ENCODE measurements at regions of chr3 and their contacts with region 1.

Region 1: DNA sequence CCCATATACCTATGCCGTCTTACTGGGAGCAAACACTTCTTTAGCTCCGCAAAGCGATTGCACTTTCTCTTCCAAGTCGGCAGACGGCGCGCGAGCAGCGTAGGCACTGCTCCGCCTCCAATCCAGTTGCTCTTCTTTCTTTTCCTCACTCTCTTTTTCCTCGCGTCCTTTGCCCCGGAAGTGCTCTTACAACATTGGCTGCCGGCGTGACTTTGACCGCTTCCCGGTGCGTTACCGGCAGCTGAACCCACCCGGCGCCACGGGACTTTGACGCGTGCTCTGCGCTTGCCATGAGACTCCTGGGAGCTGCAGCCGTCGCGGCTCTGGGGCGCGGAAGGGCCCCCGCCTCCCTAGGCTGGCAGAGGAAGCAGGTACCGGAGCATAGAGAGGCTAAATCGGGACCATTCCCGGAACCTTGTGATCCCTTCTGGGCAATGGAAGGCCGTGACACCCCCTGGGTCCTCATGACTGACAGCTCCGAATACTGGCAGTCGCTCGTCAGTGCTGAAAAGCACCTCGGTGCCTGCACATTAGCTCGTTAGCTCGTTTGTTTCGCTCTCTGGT is at the start of gene GFM1:
- DNase-seq: peak; percentile 80 to 87
- H3K4me3 ChIP-seq: peak within 1 kb of the TSS; percentile 80 to 95 (median 92)
- H3K27ac ChIP-seq: peak within 1 kb of the TSS; percentile 77; the same call in 1 of the 2 replicates
- H3K4me1 ChIP-seq: no peaks in the 10 kb centered on the region
- H3K27me3 ChIP-seq: no peaks in the 10 kb centered on the region
- CTCF ChIP-seq: peak; percentile 81 to 95 (median 91)
- EP300 ChIP-seq: no peak
- POLR2A ChIP-seq: peak; percentile 22 to 83
- RAD21 ChIP-seq: peak; percentile 50 to 56
- total RNA-seq, gene GFM1: 42.6 and 45.3 TPM in 2 replicates

Region 2: DNA sequence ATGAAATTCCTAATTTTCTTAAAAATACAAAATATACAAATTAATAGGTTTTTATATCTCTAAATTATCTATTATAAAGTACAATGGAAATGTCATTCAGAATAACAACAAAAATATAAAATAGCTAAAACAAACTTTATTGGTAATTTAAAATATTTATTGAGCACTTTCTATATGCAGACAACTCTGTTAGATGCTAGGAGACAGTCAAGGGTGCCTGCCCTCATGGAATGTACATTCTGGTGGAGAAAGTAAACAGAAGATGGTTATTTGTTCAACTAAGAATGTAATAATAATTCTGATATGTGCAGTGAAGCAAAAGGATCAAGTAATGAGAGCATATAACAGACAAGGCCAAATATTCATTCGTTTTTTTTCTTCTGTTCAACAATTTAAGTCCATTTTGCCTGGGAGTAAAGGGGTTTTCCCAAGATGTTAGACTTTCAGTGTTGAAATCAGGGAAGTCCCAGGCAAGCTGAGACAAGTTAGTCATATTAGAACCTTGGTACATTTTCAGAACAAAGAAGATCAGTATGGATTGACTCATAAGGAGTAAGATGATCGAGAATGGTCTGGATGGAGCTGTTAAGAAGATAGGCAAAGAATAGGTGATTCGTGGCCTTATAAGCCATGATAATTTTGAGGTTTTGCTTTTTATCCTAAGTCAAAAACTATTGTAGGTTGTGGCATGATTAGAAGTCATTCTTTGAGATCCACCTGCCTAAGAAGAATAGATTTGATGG is 223.6 kb before region 1 on chr3:
- CTCF ChIA-PET with region 1: no interaction called
- POLR2A ChIA-PET with region 1: no interaction called
- DNase-seq: no peak
- H3K4me3 ChIP-seq: no peak overlapping the region
- H3K27ac ChIP-seq: no peak overlapping the region
- H3K4me1 ChIP-seq: no peaks in the 10 kb centered on the region
- H3K27me3 ChIP-seq: no peaks in the 10 kb centered on the region
- CTCF ChIP-seq: no peak
- EP300 ChIP-seq: no peak
- POLR2A ChIP-seq: no peak
- RAD21 ChIP-seq: no peak

Region 3: DNA sequence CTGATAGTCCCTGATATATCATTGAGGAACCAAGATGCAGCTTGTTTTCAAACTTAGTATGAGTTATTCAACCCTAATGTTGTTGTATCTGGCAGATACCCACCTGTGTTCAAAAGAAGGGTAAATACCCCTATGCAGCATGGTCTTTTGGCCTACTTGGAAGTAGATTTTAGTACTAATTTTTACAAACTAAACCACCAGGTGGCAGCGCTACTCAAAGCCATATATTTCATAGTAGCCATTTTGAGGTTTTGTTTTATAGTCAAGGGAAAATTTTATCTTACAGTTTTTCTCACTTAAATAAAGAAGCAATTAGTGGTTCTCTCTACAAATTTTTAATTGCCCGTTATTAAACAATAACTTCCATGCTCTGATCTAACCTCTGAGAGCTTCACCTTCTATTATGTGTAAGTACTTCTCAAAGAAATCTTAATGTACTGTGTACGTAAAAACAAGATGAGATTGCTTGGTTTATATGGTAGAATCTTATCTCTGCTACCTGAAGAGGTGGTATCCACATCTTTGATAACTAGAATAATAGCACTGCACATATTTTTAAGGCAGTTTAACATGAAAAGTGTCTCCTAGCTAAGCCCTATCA is 104.9 kb before region 1 on chr3:
- CTCF ChIA-PET with region 1: interaction called, 13 read pairs
- POLR2A ChIA-PET with region 1: interaction called, 4 read pairs
- DNase-seq: no peak
- H3K4me3 ChIP-seq: no peak overlapping the region
- H3K27ac ChIP-seq: no peak overlapping the region
- H3K4me1 ChIP-seq: no peaks in the 10 kb centered on the region
- H3K27me3 ChIP-seq: no peaks in the 10 kb centered on the region
- CTCF ChIP-seq: peak in 2 of 3 experiments; percentile 34 to 46; a peak in 2 of 4 replicates
- EP300 ChIP-seq: no peak
- POLR2A ChIP-seq: no peak
- RAD21 ChIP-seq: peak; percentile 51 to 53

Region 4: DNA sequence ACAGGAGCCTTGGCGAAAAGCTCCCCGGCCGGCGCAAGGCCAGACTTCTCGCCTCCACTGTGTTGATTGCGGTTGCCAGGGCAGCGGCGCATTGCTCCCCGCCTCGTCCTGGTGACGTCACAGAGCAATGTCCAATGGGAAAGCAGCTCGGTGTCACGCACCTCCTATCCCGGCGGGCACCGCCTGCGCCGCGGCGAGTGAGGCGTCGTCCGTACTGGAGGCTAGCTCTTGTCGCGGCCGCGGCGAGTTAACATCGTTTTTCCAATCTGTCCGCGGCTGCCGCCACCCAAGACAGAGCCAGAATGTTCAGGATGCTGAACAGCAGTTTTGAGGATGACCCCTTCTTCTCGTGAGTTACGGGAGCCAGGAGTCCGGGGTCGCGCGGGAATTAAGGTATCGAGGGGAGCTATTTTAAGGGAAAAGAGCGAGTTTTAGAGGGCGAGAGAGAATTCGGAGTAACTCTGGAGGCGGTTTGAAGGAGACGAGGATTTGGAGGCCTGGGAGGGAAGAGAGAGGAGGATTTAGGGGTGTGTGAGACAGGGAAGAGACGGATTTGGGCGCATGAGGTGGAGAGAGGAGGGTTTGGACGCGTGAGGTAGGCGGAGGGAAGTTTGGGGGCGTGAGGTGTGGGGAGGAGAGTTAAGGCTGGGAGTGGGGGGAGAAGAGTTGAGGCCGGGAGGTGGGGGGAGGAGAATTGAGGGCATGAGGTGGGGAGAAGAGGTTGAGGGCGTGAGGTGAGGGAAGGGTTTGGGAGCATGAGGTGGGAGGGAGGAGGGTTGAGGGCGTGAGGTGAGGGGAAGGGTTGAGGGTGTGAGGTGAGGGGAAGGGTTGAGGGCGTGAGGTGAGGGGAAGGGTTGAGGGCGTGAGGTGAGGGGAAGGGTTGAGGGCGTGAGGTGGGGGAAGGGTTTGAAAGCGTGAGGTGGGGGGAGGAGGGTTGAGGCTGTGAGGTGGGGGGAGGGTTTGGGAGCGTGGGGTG is 73.1 kb before region 1 on chr3 and contains the start of gene MLF1:
- CTCF ChIA-PET with region 1: interaction called, 17 read pairs
- POLR2A ChIA-PET with region 1: interaction called, 3 read pairs
- DNase-seq: peak; percentile 86 to 98
- H3K4me3 ChIP-seq: peak within 1 kb of the TSS; percentile 38 to 66 (median 60)
- H3K27ac ChIP-seq: no peak within 1 kb of the TSS
- H3K4me1 ChIP-seq: peaks cover 0 to 15% (median 3%) of the 10 kb centered on the region in 4 experiments; a peak in 2 of 7 replicates
- H3K27me3 ChIP-seq: peaks cover 0 to 13% (median 10%) of the 10 kb centered on the region in 4 experiments; a peak in 5 of 7 replicates
- CTCF ChIP-seq: no peak
- EP300 ChIP-seq: peak; percentile 46 to 78; a peak in 2 of 3 replicates
- POLR2A ChIP-seq: peak; percentile 78 to 86
- RAD21 ChIP-seq: no peak
- total RNA-seq, gene MLF1: 39.1 and 48.9 TPM in 2 replicates

Region 5: DNA sequence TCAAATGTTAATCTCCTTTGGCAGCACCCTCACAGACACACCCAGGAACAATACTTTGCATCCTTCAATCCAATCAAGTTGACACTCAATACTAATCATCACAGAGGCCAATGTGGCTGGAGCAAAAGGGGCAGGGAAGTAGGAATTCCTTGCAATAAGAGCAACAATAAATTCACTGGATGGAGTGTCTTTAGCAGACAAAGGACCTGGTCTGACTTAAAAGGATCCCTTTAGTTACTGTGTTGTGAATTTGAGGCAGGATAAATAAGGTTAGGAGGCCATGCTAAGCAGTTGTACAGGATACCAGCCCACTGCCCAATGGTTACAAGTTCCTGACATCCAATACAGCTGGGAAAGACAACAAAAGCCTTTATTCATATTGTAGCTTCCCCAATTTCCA is 12.4 kb before region 1 on chr3:
- CTCF ChIA-PET with region 1: interaction called, 17 read pairs
- POLR2A ChIA-PET with region 1: interaction called, 3 read pairs
- DNase-seq: no peak
- H3K4me3 ChIP-seq: peak overlapping the region in 1 of 4 experiments; percentile 8; a peak in 1 of 8 replicates
- H3K27ac ChIP-seq: no peak overlapping the region
- H3K4me1 ChIP-seq: peaks cover 0 to 2% (median 0%) of the 10 kb centered on the region in 4 experiments; a peak in 1 of 7 replicates
- H3K27me3 ChIP-seq: no peaks in the 10 kb centered on the region
- CTCF ChIP-seq: no peak
- EP300 ChIP-seq: no peak
- POLR2A ChIP-seq: no peak
- RAD21 ChIP-seq: no peak

Region 6: GRCh38 chr3:158659454-158660237 is 15.2 kb after region 1 on chr3:
- CTCF ChIA-PET with region 1: interaction called, 45 read pairs
- POLR2A ChIA-PET with region 1: interaction called, 15 read pairs
- DNase-seq: peak in 1 of 2 experiments; percentile 64
- H3K4me3 ChIP-seq: no peak overlapping the region
- H3K27ac ChIP-seq: no peak overlapping the region
- H3K4me1 ChIP-seq: no peaks in the 10 kb centered on the region
- H3K27me3 ChIP-seq: no peaks in the 10 kb centered on the region
- CTCF ChIP-seq: peak; percentile 33 to 62 (median 46)
- EP300 ChIP-seq: no peak
- POLR2A ChIP-seq: no peak
- RAD21 ChIP-seq: peak; percentile 16 to 49; a peak in 3 of 4 replicates

Region 7: DNA sequence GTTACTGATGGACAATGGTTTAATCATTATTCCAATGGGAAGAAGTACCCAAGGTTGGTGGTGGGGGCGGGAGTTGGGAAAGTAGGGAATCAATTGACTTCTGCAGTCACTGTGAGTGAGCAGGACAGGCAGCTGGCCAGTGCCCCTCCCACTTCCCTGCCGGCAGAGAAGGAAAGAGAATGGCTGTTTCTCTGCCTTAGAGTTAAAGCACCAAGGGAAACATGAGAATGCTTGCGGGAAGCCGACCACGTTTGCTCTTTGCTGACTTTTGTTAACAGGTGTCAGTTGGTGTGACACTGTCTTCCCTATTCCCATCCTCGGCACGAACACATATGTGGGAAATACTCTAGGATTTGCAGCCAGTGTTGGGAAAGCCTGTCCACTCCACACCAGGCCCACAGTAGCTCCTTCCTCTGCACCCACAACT is 123.9 kb after region 1 on chr3:
- CTCF ChIA-PET with region 1: no interaction called
- POLR2A ChIA-PET with region 1: no interaction called
- DNase-seq: peak in 1 of 2 experiments; percentile 53
- H3K4me3 ChIP-seq: no peak overlapping the region
- H3K27ac ChIP-seq: no peak overlapping the region
- H3K4me1 ChIP-seq: peaks cover 3 to 7% (median 7%) of the 10 kb centered on the region in 4 experiments; a peak in 4 of 7 replicates
- H3K27me3 ChIP-seq: no peaks in the 10 kb centered on the region
- CTCF ChIP-seq: no peak
- EP300 ChIP-seq: no peak
- POLR2A ChIP-seq: no peak
- RAD21 ChIP-seq: no peak

Region 8: DNA sequence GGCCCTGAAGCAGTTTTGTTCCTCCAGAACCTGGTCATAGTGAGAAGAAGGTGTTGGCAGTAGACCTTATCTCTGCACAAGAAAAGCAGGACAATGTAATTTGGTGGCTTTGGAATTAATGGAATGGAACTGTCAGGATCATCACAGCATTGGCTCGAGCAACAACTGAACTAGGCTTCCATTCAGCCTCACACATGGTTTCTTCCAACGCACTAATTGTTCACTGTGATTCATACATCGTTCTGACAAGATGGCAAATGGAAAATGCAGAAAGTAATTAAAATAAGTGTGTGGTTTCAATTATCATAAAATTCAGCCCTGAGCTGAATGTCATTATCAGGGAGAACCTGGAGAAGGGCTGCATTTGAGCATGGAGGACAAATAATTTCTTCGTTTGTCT is 238.0 kb after region 1 on chr3:
- CTCF ChIA-PET with region 1: no interaction called
- POLR2A ChIA-PET with region 1: no interaction called
- DNase-seq: no peak
- H3K4me3 ChIP-seq: no peak overlapping the region
- H3K27ac ChIP-seq: no peak overlapping the region
- H3K4me1 ChIP-seq: no peaks in the 10 kb centered on the region
- H3K27me3 ChIP-seq: no peaks in the 10 kb centered on the region
- CTCF ChIP-seq: no peak
- EP300 ChIP-seq: no peak
- POLR2A ChIP-seq: no peak
- RAD21 ChIP-seq: no peak

Region 9: GRCh38 chr3:158976966-158977365 is 332.5 kb after region 1 on chr3:
- CTCF ChIA-PET with region 1: no interaction called
- POLR2A ChIA-PET with region 1: no interaction called
- DNase-seq: no peak
- H3K4me3 ChIP-seq: no peak overlapping the region
- H3K27ac ChIP-seq: no peak overlapping the region
- H3K4me1 ChIP-seq: no peaks in the 10 kb centered on the region; a peak in 1 of 7 replicates
- H3K27me3 ChIP-seq: no peaks in the 10 kb centered on the region
- CTCF ChIP-seq: no peak
- EP300 ChIP-seq: no peak
- POLR2A ChIP-seq: no peak
- RAD21 ChIP-seq: no peak

Measured in H1 (cell line).